ENCODE measurements at regions of chr2 and their contacts with region 1.

Region 1: GRCh38 chr2:216519154-216519762 is 20.6 kb downstream of the RPL37A start:
- DNase-seq: peak; percentile 61
- ATAC-seq: peak; percentile 36
- H3K4me3 ChIP-seq: no peak overlapping the region
- H3K4me3 Mint-ChIP-seq: no peak overlapping the region
- H3K27ac ChIP-seq: no peak overlapping the region
- H3K27ac Mint-ChIP-seq: no peak overlapping the region
- H3K4me1 ChIP-seq: no peaks in the 10 kb centered on the region
- H3K4me1 Mint-ChIP-seq: no peaks in the 10 kb centered on the region
- H3K27me3 ChIP-seq: no peaks in the 10 kb centered on the region
- H3K27me3 Mint-ChIP-seq: no peaks in the 10 kb centered on the region
- CTCF ChIP-seq: peak; percentile 70

Region 2: GRCh38 chr2:216222650-216223352 is 296.5 kb before region 1 on chr2:
- CTCF ChIA-PET with region 1: no interaction called
- POLR2A ChIA-PET with region 1: no interaction called
- intact Hi-C with region 1: no loop called
- DNase-seq: peak; percentile 6
- ATAC-seq: no peak
- H3K4me3 ChIP-seq: no peak overlapping the region
- H3K4me3 Mint-ChIP-seq: no peak overlapping the region
- H3K27ac ChIP-seq: peak overlapping the region in 1 of 2 donors; percentile 37
- H3K27ac Mint-ChIP-seq: peak overlapping the region; percentile 29
- H3K4me1 ChIP-seq: peaks cover 11% of the 10 kb centered on the region in 2 donors
- H3K4me1 Mint-ChIP-seq: peaks cover 17% of the 10 kb centered on the region
- H3K27me3 ChIP-seq: no peaks in the 10 kb centered on the region
- H3K27me3 Mint-ChIP-seq: no peaks in the 10 kb centered on the region
- CTCF ChIP-seq: no peak

Region 3: GRCh38 chr2:216426938-216427337 is 92.3 kb before region 1 on chr2:
- CTCF ChIA-PET with region 1: no interaction called
- POLR2A ChIA-PET with region 1: no interaction called
- intact Hi-C with region 1: no loop called
- DNase-seq: no peak
- ATAC-seq: no peak
- H3K4me3 ChIP-seq: no peak overlapping the region
- H3K4me3 Mint-ChIP-seq: no peak overlapping the region
- H3K27ac ChIP-seq: no peak overlapping the region
- H3K27ac Mint-ChIP-seq: no peak overlapping the region
- H3K4me1 ChIP-seq: no peaks in the 10 kb centered on the region
- H3K4me1 Mint-ChIP-seq: no peaks in the 10 kb centered on the region
- H3K27me3 ChIP-seq: no peaks in the 10 kb centered on the region
- H3K27me3 Mint-ChIP-seq: no peaks in the 10 kb centered on the region
- CTCF ChIP-seq: no peak

Region 4: GRCh38 chr2:216507220-216508160 is 11.8 kb before region 1 on chr2:
- CTCF ChIA-PET with region 1: interaction called, 18 read pairs
- POLR2A ChIA-PET with region 1: no interaction called
- intact Hi-C with region 1: no loop called
- DNase-seq: no peak
- ATAC-seq: no peak
- H3K4me3 ChIP-seq: no peak overlapping the region
- H3K4me3 Mint-ChIP-seq: no peak overlapping the region
- H3K27ac ChIP-seq: no peak overlapping the region
- H3K27ac Mint-ChIP-seq: no peak overlapping the region
- H3K4me1 ChIP-seq: no peaks in the 10 kb centered on the region
- H3K4me1 Mint-ChIP-seq: peaks cover 5% of the 10 kb centered on the region
- H3K27me3 ChIP-seq: no peaks in the 10 kb centered on the region
- H3K27me3 Mint-ChIP-seq: no peaks in the 10 kb centered on the region
- CTCF ChIP-seq: no peak

Region 5: GRCh38 chr2:216666461-216667233 is 147.4 kb after region 1 on chr2:
- CTCF ChIA-PET with region 1: interaction called, 32 read pairs
- POLR2A ChIA-PET with region 1: no interaction called
- intact Hi-C with region 1: no loop called
- DNase-seq: peak; percentile 71
- ATAC-seq: peak; percentile 86
- H3K4me3 ChIP-seq: no peak overlapping the region
- H3K4me3 Mint-ChIP-seq: no peak overlapping the region
- H3K27ac ChIP-seq: no peak overlapping the region
- H3K27ac Mint-ChIP-seq: no peak overlapping the region
- H3K4me1 ChIP-seq: no peaks in the 10 kb centered on the region
- H3K4me1 Mint-ChIP-seq: no peaks in the 10 kb centered on the region
- H3K27me3 ChIP-seq: peaks cover 0 to 17% (median 1%) of the 10 kb centered on the region in 4 experiments
- H3K27me3 Mint-ChIP-seq: peaks cover 34% of the 10 kb centered on the region
- CTCF ChIP-seq: peak; percentile 98

Region 6: DNA sequence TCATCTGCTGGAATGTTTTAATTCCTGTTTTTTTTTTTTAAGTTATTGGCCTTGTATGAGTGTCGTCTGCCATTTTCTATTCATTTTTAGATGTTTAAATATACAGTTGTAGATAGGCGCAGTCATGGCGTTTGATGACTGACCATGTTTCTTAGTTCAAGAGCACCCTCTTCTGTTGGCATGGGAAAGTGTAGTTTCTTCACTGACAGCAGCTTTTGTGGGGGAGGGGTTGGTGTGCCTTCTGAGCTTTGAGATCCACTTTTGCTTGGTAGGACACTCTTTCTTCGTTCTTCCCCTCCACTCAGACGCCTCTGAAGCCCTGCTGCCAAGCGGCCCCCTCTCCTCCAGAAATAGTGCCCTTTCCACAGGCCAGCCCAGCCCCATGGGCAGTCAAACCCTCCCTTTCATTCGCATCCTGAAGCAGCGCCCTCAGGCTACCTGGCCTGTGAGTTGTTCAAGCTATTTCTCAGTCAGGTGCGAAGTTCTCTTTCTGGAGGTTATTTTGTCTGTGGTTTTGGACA is 991.6 kb after region 1 on chr2:
- CTCF ChIA-PET with region 1: interaction called, 5 read pairs
- POLR2A ChIA-PET with region 1: no interaction called
- intact Hi-C with region 1: loop called (anchors 5 kb)
- DNase-seq: peak; percentile 26
- ATAC-seq: no peak
- H3K4me3 ChIP-seq: no peak overlapping the region
- H3K4me3 Mint-ChIP-seq: no peak overlapping the region
- H3K27ac ChIP-seq: no peak overlapping the region
- H3K27ac Mint-ChIP-seq: no peak overlapping the region
- H3K4me1 ChIP-seq: no peaks in the 10 kb centered on the region
- H3K4me1 Mint-ChIP-seq: no peaks in the 10 kb centered on the region
- H3K27me3 ChIP-seq: peaks cover 0 to 8% (median 4%) of the 10 kb centered on the region in 4 experiments
- H3K27me3 Mint-ChIP-seq: peaks cover 25% of the 10 kb centered on the region
- CTCF ChIP-seq: peak; percentile 44

Region 7: DNA sequence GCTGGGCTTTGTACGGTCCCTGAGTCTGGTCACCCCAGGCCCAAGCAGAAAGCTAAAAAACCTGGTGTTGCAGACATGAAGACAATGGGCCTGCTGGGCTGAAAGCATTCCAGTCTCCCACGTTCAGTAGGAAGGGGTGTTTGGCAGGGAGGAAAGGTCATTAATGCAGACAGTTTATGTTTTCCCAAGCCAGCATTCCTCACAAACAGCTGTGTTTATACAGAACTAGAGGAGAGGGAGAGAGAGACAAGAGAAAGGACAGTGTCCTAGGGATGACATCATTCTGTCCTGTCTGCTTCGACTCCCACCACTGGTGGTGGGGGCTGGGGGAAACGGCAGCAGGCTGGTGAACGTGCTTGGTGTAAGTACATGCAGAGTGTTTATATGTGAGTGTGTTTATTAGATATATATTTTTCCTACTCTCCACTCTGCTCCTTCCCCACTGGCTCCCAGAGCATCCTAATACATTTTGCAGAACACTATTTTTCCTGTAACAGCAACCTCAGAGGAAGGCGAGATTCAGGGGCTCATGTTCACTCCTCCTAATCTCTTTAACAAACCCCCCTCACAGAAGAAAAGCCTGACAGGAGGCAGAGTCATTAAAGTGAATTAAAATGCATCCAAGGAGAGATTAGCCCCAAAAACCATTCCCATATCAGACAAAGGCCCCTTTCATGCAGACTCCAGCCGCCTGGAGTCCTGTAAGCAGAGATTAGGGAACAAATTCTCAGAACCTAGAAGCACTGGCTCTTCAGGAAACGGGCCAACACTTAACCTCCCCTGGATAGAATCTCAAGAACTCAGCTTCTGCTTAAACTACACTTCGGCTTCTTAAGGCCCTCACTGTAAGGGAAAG is 1103.2 kb after region 1 on chr2:
- CTCF ChIA-PET with region 1: no interaction called
- POLR2A ChIA-PET with region 1: no interaction called
- intact Hi-C with region 1: no loop called
- DNase-seq: no peak
- ATAC-seq: no peak
- H3K4me3 ChIP-seq: no peak overlapping the region
- H3K4me3 Mint-ChIP-seq: no peak overlapping the region
- H3K27ac ChIP-seq: no peak overlapping the region
- H3K27ac Mint-ChIP-seq: no peak overlapping the region
- H3K4me1 ChIP-seq: no peaks in the 10 kb centered on the region
- H3K4me1 Mint-ChIP-seq: no peaks in the 10 kb centered on the region
- H3K27me3 ChIP-seq: peaks cover 0 to 2% (median 0%) of the 10 kb centered on the region in 4 experiments
- H3K27me3 Mint-ChIP-seq: peaks cover 8% of the 10 kb centered on the region
- CTCF ChIP-seq: no peak

Region 8: DNA sequence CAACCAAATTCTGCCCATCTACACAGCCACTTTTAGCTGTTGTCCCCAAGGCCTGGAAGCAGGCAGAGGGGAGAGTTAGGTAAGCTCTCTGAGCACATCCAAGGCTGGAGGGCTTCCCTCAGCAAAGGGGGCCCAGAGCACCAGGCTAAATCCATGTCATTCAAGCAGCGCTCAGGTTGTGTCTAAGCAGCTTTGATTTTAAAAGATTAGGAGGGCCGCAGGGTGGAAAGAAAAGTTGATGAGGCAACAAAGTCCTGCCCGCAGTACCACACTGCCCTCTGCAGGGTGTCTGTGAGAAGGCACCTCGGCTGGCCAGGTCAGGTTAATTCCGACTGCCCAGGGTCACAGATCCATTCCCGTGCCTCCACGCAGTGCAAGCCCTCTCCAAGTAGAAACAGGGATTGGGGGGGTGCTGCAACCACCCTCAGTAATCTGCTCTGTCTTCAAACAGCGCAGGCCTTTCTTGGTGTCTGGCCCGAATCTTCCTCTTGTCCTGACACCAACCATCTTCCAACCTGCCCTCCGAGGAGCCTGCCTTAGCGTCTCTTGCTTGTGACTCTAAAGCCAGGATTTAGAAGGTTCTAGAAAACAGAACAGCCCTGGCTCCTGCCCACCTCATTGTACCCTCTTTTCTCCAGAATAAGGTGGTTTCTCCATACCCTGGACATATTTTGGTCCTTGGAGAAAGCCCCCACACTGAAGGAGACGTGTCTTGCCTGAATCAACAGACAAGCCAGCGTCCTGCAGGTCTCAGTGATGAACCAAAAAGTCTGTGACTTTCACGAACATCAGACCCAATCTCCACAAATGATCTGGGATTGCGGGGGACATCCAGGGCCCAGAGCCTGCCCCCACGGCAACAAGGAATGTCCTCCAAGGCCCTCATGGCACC is 1194.4 kb after region 1 on chr2:
- CTCF ChIA-PET with region 1: interaction called, 12 read pairs
- POLR2A ChIA-PET with region 1: no interaction called
- intact Hi-C with region 1: loop called (anchors 2 kb)
- DNase-seq: peak; percentile 53
- ATAC-seq: peak; percentile 56
- H3K4me3 ChIP-seq: no peak overlapping the region
- H3K4me3 Mint-ChIP-seq: no peak overlapping the region
- H3K27ac ChIP-seq: no peak overlapping the region
- H3K27ac Mint-ChIP-seq: no peak overlapping the region
- H3K4me1 ChIP-seq: no peaks in the 10 kb centered on the region
- H3K4me1 Mint-ChIP-seq: no peaks in the 10 kb centered on the region
- H3K27me3 ChIP-seq: peaks cover 0 to 16% (median 7%) of the 10 kb centered on the region in 4 experiments
- H3K27me3 Mint-ChIP-seq: peaks cover 38% of the 10 kb centered on the region
- CTCF ChIP-seq: peak; percentile 88

Measured in B cell (primary cell).